GM10248 (cell line): ENCODE measurements at regions of chr7 and their contacts with region 1.

Region 1: DNA sequence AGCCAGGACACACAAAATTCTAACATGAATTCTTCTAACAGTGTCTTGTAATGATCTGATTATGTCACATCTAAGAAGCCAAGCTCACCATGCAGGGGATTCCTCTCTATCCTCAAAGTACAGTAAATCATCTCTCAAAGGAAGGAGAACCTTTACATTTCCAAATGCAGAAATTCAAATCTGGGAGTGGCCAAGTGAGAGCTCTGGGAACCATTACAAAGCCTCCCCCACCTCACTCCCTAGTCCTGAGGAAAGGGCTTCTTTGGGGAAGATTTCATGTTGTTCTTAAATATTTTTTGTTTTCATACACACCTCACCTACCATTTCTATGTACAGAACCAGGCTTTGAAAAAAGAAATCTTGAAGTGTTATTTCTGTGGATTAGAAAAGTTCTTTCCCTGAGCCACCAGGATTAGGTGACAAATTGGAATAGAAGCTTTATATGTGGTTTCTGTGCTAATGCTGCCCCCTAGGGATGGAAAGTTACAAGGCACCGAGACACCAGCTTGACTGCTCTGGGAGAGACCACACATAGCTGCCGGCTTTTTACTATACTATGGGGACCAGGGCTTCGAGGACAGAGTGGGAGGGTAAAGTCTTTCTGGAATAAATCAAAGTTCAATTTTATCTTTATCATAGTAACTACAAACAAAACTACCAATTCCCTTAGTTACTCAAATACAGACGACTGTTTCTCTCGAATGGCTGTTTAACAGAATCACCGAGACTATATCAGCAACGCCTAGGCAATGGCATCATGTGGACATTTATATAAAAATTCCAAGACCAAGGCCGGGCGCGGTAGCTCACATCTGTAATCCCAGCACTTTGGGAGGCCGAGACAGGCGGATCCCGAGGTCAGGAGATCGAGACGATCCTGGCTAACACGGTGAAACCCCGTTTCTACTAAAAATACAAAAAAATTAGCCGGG is 116.1 kb downstream of the RNF216 start:
- DNase-seq: peak; percentile 73
- CTCF ChIP-seq: peak; percentile 73

Region 2: DNA sequence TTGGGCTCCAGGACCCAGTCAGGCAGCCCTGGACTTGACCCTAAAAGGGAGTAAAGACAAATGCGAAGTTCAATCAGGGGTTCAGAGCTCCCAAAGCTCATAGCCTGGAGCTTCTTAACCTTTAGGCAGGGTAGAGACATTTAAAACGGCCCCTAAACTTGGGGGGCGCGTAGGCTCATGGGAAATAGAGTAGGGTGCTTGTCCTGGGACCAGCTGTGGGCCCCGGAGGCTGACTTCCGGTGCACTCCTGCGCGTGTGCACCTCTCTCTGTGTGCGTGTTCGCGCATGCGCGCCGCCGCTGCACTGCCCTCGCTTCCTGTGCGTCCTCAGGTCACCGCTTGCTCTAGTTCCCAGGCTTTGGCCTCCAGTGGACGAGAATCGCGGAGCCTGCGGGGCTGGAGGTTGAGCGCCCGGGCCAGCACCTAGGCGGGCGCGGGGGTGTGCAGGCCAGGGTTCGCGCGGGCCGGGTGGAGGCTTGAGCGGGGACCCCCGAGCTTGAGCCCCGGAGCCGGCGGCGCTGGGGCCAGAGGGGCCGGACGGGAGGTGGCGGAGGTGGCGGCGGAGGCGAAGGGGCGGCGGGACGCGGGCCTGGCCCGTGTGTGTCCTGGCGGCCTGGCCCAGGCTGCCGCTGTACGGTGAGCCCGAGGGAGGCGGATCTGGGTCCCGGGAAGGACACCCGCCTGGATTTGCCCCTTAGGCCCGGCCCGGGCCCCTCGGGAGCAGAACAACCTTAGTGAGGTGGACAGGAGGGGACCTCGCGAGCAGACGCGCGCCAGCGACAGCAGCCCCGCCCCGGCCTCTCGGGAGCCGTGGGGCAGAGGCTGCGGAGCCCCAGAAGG is 619.6 kb before region 1 on chr7 and contains the start of gene RBAK:
- CTCF ChIA-PET with region 1: no interaction called
- POLR2A ChIA-PET with region 1: no interaction called
- DNase-seq: peak; percentile 95
- CTCF ChIP-seq: no peak

Region 3: GRCh38 chr7:5494683-5495561 is 170.4 kb before region 1 on chr7:
- CTCF ChIA-PET with region 1: interaction called, 72 read pairs
- POLR2A ChIA-PET with region 1: no interaction called
- DNase-seq: peak; percentile 87
- CTCF ChIP-seq: peak; percentile 95

Region 4: DNA sequence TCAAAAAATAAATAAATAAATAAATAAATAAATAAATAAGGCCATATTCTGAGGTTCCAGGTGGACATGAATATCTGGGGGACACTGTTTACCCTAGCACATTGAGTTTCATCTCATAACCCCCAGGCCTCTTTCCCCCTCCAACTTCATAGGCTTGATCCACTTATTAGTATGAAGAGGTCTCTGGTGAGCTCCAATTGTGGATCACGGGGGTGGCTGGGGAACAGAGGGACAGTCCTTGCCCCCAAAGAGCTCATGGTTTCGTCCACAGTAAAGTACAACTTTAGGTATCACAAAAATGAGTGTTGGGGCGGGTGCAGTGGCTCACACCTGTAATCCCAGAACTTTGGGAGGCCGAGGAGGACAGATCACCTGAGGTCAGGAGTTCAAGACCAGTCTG is 148.3 kb before region 1 on chr7:
- CTCF ChIA-PET with region 1: no interaction called
- POLR2A ChIA-PET with region 1: no interaction called
- DNase-seq: no peak
- CTCF ChIP-seq: no peak

Region 5: GRCh38 chr7:5567790-5568189 is 97.6 kb before region 1 on chr7:
- CTCF ChIA-PET with region 1: interaction called, 11 read pairs
- POLR2A ChIA-PET with region 1: no interaction called
- DNase-seq: no peak
- CTCF ChIP-seq: no peak

Region 6: GRCh38 chr7:5646852-5647251 is 18.5 kb before region 1 on chr7:
- CTCF ChIA-PET with region 1: interaction called, 38 read pairs
- POLR2A ChIA-PET with region 1: no interaction called
- DNase-seq: no peak
- CTCF ChIP-seq: no peak

Region 7: DNA sequence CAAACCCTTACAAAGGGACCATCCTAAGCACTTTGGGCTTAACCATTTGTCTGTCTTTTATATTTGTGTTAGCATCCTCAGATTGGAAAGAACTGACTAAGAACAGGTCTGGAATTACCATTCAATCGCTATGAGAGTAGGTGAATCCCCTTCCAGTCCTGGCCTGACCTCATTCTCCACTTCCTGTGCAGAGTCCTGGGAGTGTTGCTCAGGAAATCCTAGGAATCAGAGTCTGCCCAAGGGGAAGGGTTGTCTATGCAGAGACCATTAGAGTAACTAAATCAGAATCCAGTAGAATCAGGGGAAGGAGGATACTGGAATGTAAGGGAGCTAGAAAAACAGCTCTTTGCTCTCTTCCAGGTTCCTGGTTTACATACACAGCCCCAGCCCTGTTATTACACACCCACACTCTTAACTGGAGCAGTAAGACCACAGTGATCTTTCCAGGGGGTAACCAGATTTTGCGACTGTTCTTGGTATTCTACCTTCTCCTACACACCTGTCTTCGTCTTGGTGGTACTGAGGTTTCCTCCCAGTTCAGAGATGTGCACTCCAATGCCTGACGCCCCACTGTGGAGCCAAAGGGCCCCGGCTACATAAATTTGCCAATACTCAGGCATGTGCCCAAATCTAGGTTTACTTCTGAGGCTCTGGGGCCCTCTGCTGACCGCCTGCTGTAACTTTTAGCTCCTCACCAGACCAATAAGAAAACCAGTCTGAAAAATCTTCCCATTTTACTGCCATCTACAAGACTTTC is 12.4 kb after region 1 on chr7:
- CTCF ChIA-PET with region 1: interaction called, 152 read pairs
- POLR2A ChIA-PET with region 1: interaction called, 4 read pairs
- DNase-seq: peak; percentile 48
- CTCF ChIP-seq: peak; percentile 70

Region 8: DNA sequence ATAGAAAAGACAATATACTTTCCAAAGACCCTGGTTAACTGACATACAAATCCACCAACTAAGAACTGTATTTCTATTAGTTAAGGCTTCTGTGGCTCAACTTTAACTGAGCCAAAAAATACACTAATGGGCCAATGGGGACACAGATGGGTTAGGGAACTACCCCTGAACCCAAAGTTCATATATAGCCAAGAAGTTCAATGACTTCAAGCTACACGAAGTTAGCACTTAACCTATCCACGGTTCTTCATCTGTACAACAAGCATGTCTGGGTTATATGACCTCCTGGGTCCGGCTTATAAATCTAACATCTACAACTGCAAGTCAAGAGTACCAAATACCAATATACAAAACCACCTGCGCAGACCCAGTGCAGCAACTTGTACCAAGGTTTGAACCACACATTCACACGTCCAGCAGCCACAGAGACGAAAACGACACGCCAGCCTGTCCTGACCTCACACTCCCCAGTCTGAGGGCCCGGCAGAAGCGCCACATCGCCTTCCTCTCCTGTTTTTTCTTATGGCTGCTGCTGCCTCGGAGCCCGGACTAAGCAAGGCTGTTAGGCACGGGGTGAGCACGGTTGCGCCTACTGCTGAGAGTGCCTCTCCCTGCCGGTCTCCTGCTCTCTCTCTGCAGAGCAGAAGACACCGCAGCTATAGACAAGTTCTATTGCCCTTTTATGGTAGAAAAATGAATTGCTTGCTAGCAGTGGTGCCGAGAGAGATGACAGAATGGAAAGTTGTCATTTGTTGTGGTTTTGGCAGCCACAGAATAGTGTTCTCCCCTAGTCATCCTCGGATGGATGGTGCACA is 29.8 kb after region 1 on chr7:
- CTCF ChIA-PET with region 1: interaction called, 27 read pairs
- POLR2A ChIA-PET with region 1: interaction called, 3 read pairs
- DNase-seq: peak; percentile 62
- CTCF ChIP-seq: no peak

Region 9: GRCh38 chr7:6430271-6430940 is 765.0 kb after region 1 on chr7:
- CTCF ChIA-PET with region 1: no interaction called
- POLR2A ChIA-PET with region 1: no interaction called
- DNase-seq: no peak
- CTCF ChIP-seq: no peak